Endothelial cell of umbilical vein (primary cell): ENCODE measurements at regions of chr3 and their contacts with region 1.

Region 1: GRCh38 chr3:50611464-50612233 is at the start of gene CISH:
- DNase-seq: peak; percentile 96
- H3K4me3 ChIP-seq: peak within 1 kb of the TSS; percentile 9 to 51 (median 50)
- H3K27ac ChIP-seq: peak within 1 kb of the TSS; percentile 50
- H3K4me1 ChIP-seq: peaks cover 21% of the 10 kb centered on the region
- H3K27me3 ChIP-seq: no peaks in the 10 kb centered on the region
- CTCF ChIP-seq: peak; percentile 50 to 79
- POLR2A ChIP-seq: no peak
- total RNA-seq, gene CISH: 2.2 and 2.5 TPM in 2 replicates

Region 2: GRCh38 chr3:50519471-50520089 is 92.1 kb before region 1 on chr3:
- CTCF ChIA-PET with region 1: interaction called, 4 read pairs
- POLR2A ChIA-PET with region 1: no interaction called
- dilution Hi-C with region 1: no loop called
- intact Hi-C with region 1: loop called (anchors 1 kb)
- DNase-seq: peak; percentile 27
- H3K4me3 ChIP-seq: no peak overlapping the region
- H3K27ac ChIP-seq: no peak overlapping the region
- H3K4me1 ChIP-seq: peaks cover 5% of the 10 kb centered on the region
- H3K27me3 ChIP-seq: peaks cover 0 to under 1% of the 10 kb centered on the region in 2 experiments
- CTCF ChIP-seq: peak; percentile 76 to 88
- POLR2A ChIP-seq: no peak

Region 3: DNA sequence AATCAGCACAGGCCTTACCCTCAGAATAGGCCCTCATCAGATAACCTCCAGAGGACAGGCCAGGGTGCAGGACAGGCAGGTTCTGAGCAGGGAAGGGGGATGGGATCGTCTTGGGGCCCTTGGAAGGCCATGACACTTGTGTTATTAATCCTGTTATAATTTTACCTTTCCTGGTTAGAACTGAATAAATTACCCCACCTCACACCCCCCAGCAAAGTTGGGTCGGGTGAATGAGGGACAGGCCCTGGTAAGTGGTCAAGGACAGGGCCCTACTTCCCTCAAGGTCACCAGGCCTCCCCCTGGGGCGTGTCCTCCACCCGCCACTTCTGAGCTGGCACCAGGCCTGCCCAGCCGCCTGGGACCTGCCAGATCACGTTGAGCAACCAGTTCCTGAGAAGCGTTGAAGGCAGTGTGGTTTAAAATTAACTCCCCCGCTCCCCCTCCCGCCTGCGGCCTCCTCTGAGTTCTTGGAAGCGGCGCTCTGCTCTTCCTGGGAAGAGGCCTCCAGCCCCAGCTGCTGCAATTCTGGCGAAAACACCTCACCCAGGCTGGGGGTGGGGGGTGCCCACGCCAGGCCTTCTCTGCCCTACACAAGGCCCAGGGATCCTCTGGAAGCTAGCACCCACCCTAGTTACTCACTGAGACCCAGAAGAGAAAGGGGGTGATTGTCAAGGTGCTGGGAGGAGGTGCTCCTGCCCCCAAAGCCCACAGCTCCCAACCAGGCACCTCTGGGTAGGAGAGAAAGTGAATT is 10.6 kb before region 1 on chr3:
- CTCF ChIA-PET with region 1: interaction called, 6 read pairs
- POLR2A ChIA-PET with region 1: no interaction called
- dilution Hi-C with region 1: no loop called
- intact Hi-C with region 1: loop called (anchors 1 kb)
- DNase-seq: peak; percentile 87
- H3K4me3 ChIP-seq: no peak overlapping the region
- H3K27ac ChIP-seq: peak overlapping the region; percentile 42
- H3K4me1 ChIP-seq: peaks cover 10% of the 10 kb centered on the region
- H3K27me3 ChIP-seq: no peaks in the 10 kb centered on the region
- CTCF ChIP-seq: no peak
- POLR2A ChIP-seq: no peak

Region 4: GRCh38 chr3:51099794-51100535 is 488.3 kb after region 1 on chr3:
- CTCF ChIA-PET with region 1: interaction called, 16 read pairs
- POLR2A ChIA-PET with region 1: no interaction called
- dilution Hi-C with region 1: no loop called
- intact Hi-C with region 1: no loop called
- DNase-seq: peak; percentile 50
- H3K4me3 ChIP-seq: no peak overlapping the region
- H3K27ac ChIP-seq: no peak overlapping the region
- H3K4me1 ChIP-seq: no peaks in the 10 kb centered on the region
- H3K27me3 ChIP-seq: no peaks in the 10 kb centered on the region
- CTCF ChIP-seq: peak; percentile 64 to 72
- POLR2A ChIP-seq: no peak

Region 5: GRCh38 chr3:51379301-51379700 is 767.7 kb after region 1 on chr3:
- CTCF ChIA-PET with region 1: interaction called, 14 read pairs
- POLR2A ChIA-PET with region 1: no interaction called
- dilution Hi-C with region 1: no loop called
- intact Hi-C with region 1: no loop called
- DNase-seq: no peak
- H3K4me3 ChIP-seq: no peak overlapping the region
- H3K27ac ChIP-seq: no peak overlapping the region
- H3K4me1 ChIP-seq: peaks cover 6% of the 10 kb centered on the region
- H3K27me3 ChIP-seq: no peaks in the 10 kb centered on the region
- CTCF ChIP-seq: no peak
- POLR2A ChIP-seq: no peak

Region 6: GRCh38 chr3:51434746-51435327 is 823.2 kb after region 1 on chr3:
- CTCF ChIA-PET with region 1: interaction called, 11 read pairs
- POLR2A ChIA-PET with region 1: no interaction called
- dilution Hi-C with region 1: no loop called
- intact Hi-C with region 1: loop called (anchors 1 kb)
- DNase-seq: peak; percentile 62
- H3K4me3 ChIP-seq: no peak overlapping the region
- H3K27ac ChIP-seq: no peak overlapping the region
- H3K4me1 ChIP-seq: no peaks in the 10 kb centered on the region
- H3K27me3 ChIP-seq: no peaks in the 10 kb centered on the region
- CTCF ChIP-seq: peak; percentile 62 to 77
- POLR2A ChIP-seq: no peak